ENCODE measurements at regions of chr12 and their contacts with region 1.

Region 1: GRCh38 chr12:11648831-11649702 is at the start of gene ETV6:
- DNase-seq: peak; percentile 72
- ATAC-seq: peak; percentile 54
- H3K4me3 Mint-ChIP-seq: peak within 1 kb of the TSS; percentile 99
- H3K27ac Mint-ChIP-seq: peak within 1 kb of the TSS; percentile 98
- H3K4me1 Mint-ChIP-seq: peaks cover 30% of the 10 kb centered on the region
- H3K27me3 Mint-ChIP-seq: no peaks in the 10 kb centered on the region
- CTCF ChIP-seq: no peak
- total RNA-seq, gene ETV6: 116 and 130 TPM in 2 replicates

Region 2: GRCh38 chr12:11621797-11622423 is 27.2 kb before region 1 on chr12:
- CTCF ChIA-PET with region 1: interaction called, 4 read pairs
- POLR2A ChIA-PET with region 1: interaction called, 7 read pairs
- intact Hi-C with region 1: loop called (anchors 1 kb)
- DNase-seq: no peak
- ATAC-seq: peak; percentile 47
- H3K4me3 Mint-ChIP-seq: no peak overlapping the region
- H3K27ac Mint-ChIP-seq: peak overlapping the region; percentile 6
- H3K4me1 Mint-ChIP-seq: peaks cover 11% of the 10 kb centered on the region
- H3K27me3 Mint-ChIP-seq: no peaks in the 10 kb centered on the region
- CTCF ChIP-seq: no peak

Region 3: GRCh38 chr12:11730299-11731041 is 81.4 kb after region 1 on chr12:
- CTCF ChIA-PET with region 1: no interaction called
- POLR2A ChIA-PET with region 1: interaction called, 158 read pairs
- intact Hi-C with region 1: loop called (anchors 1 kb)
- DNase-seq: peak; percentile 41
- ATAC-seq: peak; percentile 78
- H3K4me3 Mint-ChIP-seq: peak overlapping the region; percentile 74
- H3K27ac Mint-ChIP-seq: peak overlapping the region; percentile 89
- H3K4me1 Mint-ChIP-seq: peaks cover 96% of the 10 kb centered on the region
- H3K27me3 Mint-ChIP-seq: no peaks in the 10 kb centered on the region
- CTCF ChIP-seq: no peak

Region 4: GRCh38 chr12:11758510-11759493 is 109.7 kb after region 1 on chr12:
- CTCF ChIA-PET with region 1: no interaction called
- POLR2A ChIA-PET with region 1: interaction called, 101 read pairs
- intact Hi-C with region 1: no loop called
- DNase-seq: no peak
- ATAC-seq: peak; percentile 74
- H3K4me3 Mint-ChIP-seq: peak overlapping the region; percentile 59
- H3K27ac Mint-ChIP-seq: peak overlapping the region; percentile 91
- H3K4me1 Mint-ChIP-seq: peaks cover 72% of the 10 kb centered on the region
- H3K27me3 Mint-ChIP-seq: no peaks in the 10 kb centered on the region
- CTCF ChIP-seq: no peak

Region 5: GRCh38 chr12:11822081-11822834 is 173.2 kb after region 1 on chr12:
- CTCF ChIA-PET with region 1: no interaction called
- POLR2A ChIA-PET with region 1: interaction called, 13 read pairs
- intact Hi-C with region 1: no loop called
- DNase-seq: peak; percentile 48
- ATAC-seq: peak; percentile 70
- H3K4me3 Mint-ChIP-seq: peak overlapping the region; percentile 70
- H3K27ac Mint-ChIP-seq: peak overlapping the region; percentile 93
- H3K4me1 Mint-ChIP-seq: peaks cover 52% of the 10 kb centered on the region
- H3K27me3 Mint-ChIP-seq: no peaks in the 10 kb centered on the region
- CTCF ChIP-seq: no peak

Region 6: GRCh38 chr12:12724661-12725545 is 1075.8 kb after region 1 on chr12:
- CTCF ChIA-PET with region 1: no interaction called
- POLR2A ChIA-PET with region 1: interaction called, 8 read pairs
- intact Hi-C with region 1: loop called (anchors 1 kb)
- DNase-seq: peak; percentile 81
- ATAC-seq: peak; percentile 69
- H3K4me3 Mint-ChIP-seq: peak overlapping the region; percentile 97
- H3K27ac Mint-ChIP-seq: peak overlapping the region; percentile 97
- H3K4me1 Mint-ChIP-seq: peaks cover 50% of the 10 kb centered on the region
- H3K27me3 Mint-ChIP-seq: no peaks in the 10 kb centered on the region
- CTCF ChIP-seq: no peak

Measured in activated B cell treated with CpG ODN at 0.5 μM for 24 hours (primary cell).